Caco-2 (cell line): ENCODE measurements at regions of chr12 and their contacts with region 1.

Region 1: DNA sequence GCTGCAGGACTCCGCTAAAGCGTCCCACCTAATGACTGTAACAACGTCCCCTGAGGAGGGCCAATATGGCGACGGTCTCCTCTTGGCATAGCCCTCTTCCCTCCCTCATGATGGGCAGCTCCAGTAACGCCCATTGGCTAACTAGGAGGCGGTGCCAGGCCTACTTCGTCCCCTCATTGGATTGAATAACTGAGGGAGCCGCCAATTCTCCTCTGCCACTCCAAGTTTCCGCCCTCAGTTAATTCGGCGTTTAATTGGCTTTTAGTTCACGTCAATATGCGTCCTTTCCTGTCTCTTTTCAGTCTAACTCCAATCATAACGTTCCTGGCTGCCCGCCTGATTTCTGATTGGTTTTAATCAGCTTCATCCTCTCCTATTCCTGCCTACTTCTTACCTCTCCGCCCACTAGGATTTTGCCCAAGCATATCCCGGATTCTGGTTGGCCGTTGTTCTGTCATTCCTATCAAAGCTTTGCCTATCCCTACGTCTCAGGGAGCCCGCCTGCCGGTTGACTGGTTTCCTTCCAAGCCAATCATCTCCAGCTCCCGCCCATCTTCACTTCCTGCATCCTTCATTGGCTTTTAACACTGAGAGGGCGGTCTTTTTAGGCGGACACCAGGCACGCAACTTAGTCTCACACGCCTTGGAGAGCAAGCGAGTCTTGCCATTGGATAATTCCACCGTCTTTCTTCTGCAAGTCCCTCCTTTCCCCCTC is 430 bp upstream of the SP1 start:
- DNase-seq: peak; percentile 98 to 99
- H3K4me3 ChIP-seq: peak overlapping the region; percentile 45
- H3K4me3 Mint-ChIP-seq: no peak overlapping the region
- H3K27ac Mint-ChIP-seq: no peak overlapping the region
- H3K4me1 ChIP-seq: peaks cover 22% of the 10 kb centered on the region
- H3K4me1 Mint-ChIP-seq: peaks cover 9% of the 10 kb centered on the region
- H3K27me3 ChIP-seq: no peaks in the 10 kb centered on the region
- H3K27me3 Mint-ChIP-seq: no peaks in the 10 kb centered on the region
- CTCF ChIP-seq: no peak

Region 2: DNA sequence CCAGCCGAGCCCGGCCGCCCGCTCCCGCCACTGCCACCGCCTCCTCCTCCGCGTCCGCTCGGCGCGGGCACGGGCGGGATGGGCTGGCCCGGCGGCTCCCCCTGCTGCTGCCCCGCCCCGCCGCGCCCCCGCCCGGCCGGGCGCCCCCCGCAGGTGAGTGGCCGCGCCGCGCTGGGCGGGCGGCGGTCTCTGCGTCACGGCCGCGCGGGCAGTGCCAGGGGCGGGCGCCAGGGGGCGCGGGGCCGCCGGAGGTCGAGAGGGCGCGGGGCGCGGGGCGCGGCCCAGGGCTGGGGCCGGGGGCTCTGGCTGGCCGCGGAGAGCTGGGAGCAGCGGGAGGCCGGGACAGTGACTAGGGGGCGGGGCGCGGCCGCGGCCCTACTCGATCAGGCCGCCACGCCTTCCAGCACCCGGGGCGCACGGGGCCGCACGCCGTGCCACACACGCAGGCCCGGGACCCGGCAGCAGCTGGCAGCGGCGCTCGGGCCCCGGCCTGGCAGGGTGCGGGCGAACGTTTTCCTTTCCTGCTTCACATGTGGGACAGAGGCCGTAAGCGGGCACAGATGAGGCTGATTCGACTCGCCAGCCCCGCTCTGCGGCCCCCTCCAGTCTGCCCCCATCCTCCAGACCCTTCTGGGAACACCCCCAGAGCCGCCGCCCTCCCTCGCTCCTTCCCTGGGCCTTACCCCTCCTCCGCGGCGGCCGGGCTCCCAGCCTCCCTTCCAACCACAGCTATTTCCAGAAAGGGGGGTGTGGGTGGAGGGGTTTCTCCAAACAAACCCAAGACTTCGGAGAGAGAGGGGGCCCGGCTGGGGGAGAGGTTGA is 332.1 kb before region 1 on chr12:
- CTCF ChIA-PET with region 1: no interaction called
- POLR2A ChIA-PET with region 1: interaction called, 10 read pairs
- intact Hi-C with region 1: no loop called
- DNase-seq: peak; percentile 39 to 80
- H3K4me3 ChIP-seq: peak overlapping the region; percentile 74; the same call in 1 of the 2 replicates
- H3K4me3 Mint-ChIP-seq: peak overlapping the region; percentile 87
- H3K27ac Mint-ChIP-seq: peak overlapping the region; percentile 82
- H3K4me1 ChIP-seq: peaks cover 75% of the 10 kb centered on the region
- H3K4me1 Mint-ChIP-seq: peaks cover 35% of the 10 kb centered on the region
- H3K27me3 ChIP-seq: no peaks in the 10 kb centered on the region
- H3K27me3 Mint-ChIP-seq: no peaks in the 10 kb centered on the region
- CTCF ChIP-seq: peak in 1 of 2 experiments; percentile 5

Region 3: GRCh38 chr12:53344824-53345485 is 34.6 kb before region 1 on chr12:
- CTCF ChIA-PET with region 1: interaction called, 13 read pairs
- POLR2A ChIA-PET with region 1: interaction called, 6 read pairs
- intact Hi-C with region 1: no loop called
- DNase-seq: peak; percentile 73 to 84
- H3K4me3 ChIP-seq: peak overlapping the region; percentile 69
- H3K4me3 Mint-ChIP-seq: peak overlapping the region; percentile 97
- H3K27ac Mint-ChIP-seq: peak overlapping the region; percentile 77
- H3K4me1 ChIP-seq: no peaks in the 10 kb centered on the region
- H3K4me1 Mint-ChIP-seq: peaks cover 6% of the 10 kb centered on the region
- H3K27me3 ChIP-seq: no peaks in the 10 kb centered on the region
- H3K27me3 Mint-ChIP-seq: no peaks in the 10 kb centered on the region
- CTCF ChIP-seq: peak; percentile 64 to 91

Region 4: DNA sequence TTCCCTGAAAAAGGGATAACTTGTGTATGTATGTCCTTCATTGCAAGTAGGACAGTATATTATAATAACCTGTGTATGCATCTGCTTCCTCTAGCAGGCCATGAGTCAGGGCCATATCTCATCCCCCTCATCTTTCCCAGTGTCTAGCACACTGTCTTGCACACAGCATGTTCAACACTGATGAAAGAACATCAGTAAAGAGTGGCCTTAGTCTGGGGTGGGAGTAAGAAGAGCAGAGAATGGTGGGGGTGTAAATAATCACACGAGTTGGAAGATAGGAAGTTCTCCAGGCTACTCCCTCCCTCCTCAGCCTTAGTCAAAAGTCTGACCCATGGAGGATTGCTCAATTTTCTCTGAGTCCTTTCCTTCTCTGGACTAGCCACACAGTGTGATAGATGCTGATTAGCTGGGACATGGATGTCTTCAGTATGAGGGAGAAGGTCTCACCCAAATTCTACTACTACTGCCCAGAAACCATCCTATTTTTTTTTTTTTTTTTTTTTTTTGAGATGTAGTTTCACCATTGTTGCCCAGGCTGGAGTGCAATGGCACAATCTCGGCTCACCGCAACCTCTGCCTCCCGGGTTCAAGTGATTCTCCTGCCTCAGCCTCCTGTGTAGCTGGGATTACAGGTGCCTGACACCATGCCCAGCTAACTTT is 14.2 kb before region 1 on chr12:
- CTCF ChIA-PET with region 1: no interaction called
- POLR2A ChIA-PET with region 1: interaction called, 14 read pairs
- intact Hi-C with region 1: no loop called
- DNase-seq: no peak
- H3K4me3 ChIP-seq: no peak overlapping the region
- H3K4me3 Mint-ChIP-seq: no peak overlapping the region
- H3K27ac Mint-ChIP-seq: no peak overlapping the region
- H3K4me1 ChIP-seq: no peaks in the 10 kb centered on the region
- H3K4me1 Mint-ChIP-seq: no peaks in the 10 kb centered on the region
- H3K27me3 ChIP-seq: no peaks in the 10 kb centered on the region
- H3K27me3 Mint-ChIP-seq: no peaks in the 10 kb centered on the region
- CTCF ChIP-seq: no peak

Region 5: DNA sequence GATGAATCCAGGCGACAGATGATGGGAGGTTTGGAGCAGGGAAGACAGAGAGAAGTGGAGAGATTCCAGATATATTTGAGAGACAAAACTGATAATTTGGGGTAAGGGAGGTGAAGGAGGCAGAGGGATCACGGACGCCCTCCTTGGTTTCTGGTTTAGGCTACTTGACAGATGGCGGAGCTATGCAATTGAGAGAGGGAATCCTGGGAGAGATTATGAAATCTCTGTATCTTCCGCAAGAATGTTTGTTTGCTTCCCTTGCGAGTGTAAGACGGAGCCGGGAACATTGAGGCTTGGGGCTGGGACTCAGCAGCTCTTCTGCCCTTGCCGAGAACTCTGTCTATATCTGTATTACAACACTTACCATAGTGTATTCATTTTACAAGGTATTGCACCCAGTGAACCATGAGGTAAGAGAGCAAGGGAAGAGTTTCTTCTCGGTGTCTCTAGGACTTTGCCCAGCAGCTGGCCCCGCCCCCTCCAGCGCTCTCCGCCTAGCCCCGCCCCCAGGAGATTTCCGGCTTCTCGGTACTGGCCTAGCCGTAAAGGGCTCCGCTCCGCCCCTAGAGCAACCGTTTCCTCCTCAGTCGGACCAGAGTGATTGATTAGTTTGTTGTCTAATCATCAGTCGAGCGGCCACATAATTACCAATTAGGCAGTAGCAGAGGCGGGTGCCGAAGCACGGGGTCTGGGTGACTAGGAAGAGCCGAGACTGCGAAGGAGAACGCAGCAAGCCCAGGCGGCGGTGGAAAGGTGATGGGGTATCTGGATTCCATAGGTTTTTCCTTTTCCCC is 61.7 kb after region 1 on chr12 and contains the start of gene PRR13:
- CTCF ChIA-PET with region 1: no interaction called
- POLR2A ChIA-PET with region 1: interaction called, 13 read pairs
- intact Hi-C with region 1: loop called (anchors 1 kb)
- DNase-seq: peak; percentile 98 to 99
- H3K4me3 ChIP-seq: peak within 1 kb of the TSS; percentile 69
- H3K4me3 Mint-ChIP-seq: peak within 1 kb of the TSS; percentile 85
- H3K27ac Mint-ChIP-seq: peak within 1 kb of the TSS; percentile 98
- H3K4me1 ChIP-seq: peaks cover 30% of the 10 kb centered on the region
- H3K4me1 Mint-ChIP-seq: peaks cover 26% of the 10 kb centered on the region
- H3K27me3 ChIP-seq: no peaks in the 10 kb centered on the region
- H3K27me3 Mint-ChIP-seq: no peaks in the 10 kb centered on the region
- CTCF ChIP-seq: no peak
- total RNA-seq, gene PRR13: 395 and 400 TPM in 2 replicates